HEK293 (cell line): ENCODE measurements at regions of chr11 and their contacts with region 1.

Region 1: GRCh38 chr11:86869966-86870570 is 69.7 kb downstream of the PRSS23 start:
- H3K4me3 ChIP-seq: no peak overlapping the region
- H3K27ac ChIP-seq: no peak overlapping the region
- H3K4me1 ChIP-seq: no peaks in the 10 kb centered on the region
- CTCF ChIP-seq: no peak

Region 2: GRCh38 chr11:86629045-86629706 is 240.9 kb before region 1 on chr11:
- CTCF ChIA-PET with region 1: no interaction called
- POLR2A ChIA-PET with region 1: no interaction called
- H3K4me3 ChIP-seq: no peak overlapping the region
- H3K27ac ChIP-seq: no peak overlapping the region
- H3K4me1 ChIP-seq: no peaks in the 10 kb centered on the region
- CTCF ChIP-seq: no peak

Region 3: DNA sequence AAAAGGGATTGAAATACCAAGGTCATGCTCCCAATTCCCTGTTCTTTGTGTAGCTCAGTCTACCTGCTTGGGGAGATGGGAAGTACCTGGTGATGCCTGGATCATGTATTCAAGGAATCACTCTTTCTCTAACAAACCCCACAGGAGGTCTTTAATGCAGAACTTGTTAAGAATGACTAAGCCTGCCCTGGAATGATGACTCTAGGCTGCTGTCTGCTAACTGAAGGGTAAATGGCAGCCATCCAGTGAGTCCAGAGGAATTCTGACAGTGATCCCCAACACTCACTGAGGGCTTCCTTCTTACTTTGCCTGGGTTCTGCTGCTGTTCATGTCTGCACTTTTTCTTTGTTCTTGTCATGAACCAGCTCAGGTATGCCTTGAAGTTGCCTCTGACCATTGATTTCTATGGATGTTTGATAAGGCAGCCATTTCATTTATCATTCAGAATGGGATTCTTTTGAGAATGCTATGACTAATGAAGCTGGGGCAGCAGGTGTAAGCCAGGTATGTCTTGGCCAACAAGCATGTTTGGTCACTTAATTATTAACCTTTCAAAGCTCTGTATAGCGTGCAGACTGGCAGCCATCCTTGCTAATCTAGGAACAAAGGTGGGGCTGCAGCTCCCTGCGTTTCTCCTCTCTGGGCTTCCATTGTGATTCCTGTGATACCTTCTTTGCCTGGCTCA is 58.3 kb before region 1 on chr11:
- CTCF ChIA-PET with region 1: interaction called, 10 read pairs
- POLR2A ChIA-PET with region 1: no interaction called
- H3K4me3 ChIP-seq: no peak overlapping the region
- H3K27ac ChIP-seq: no peak overlapping the region
- H3K4me1 ChIP-seq: peaks cover 3% of the 10 kb centered on the region; the same call in 1 of the 2 replicates
- CTCF ChIP-seq: no peak

Region 4: GRCh38 chr11:86888164-86889000 is 18.3 kb after region 1 on chr11:
- CTCF ChIA-PET with region 1: interaction called, 14 read pairs
- POLR2A ChIA-PET with region 1: no interaction called
- H3K4me3 ChIP-seq: no peak overlapping the region
- H3K27ac ChIP-seq: no peak overlapping the region
- H3K4me1 ChIP-seq: no peaks in the 10 kb centered on the region
- CTCF ChIP-seq: no peak

Region 5: GRCh38 chr11:86919557-86920210 is 49.6 kb after region 1 on chr11:
- CTCF ChIA-PET with region 1: interaction called, 144 read pairs
- POLR2A ChIA-PET with region 1: no interaction called
- H3K4me3 ChIP-seq: no peak overlapping the region
- H3K27ac ChIP-seq: no peak overlapping the region
- H3K4me1 ChIP-seq: no peaks in the 10 kb centered on the region
- CTCF ChIP-seq: peak; percentile 42; the same call in 1 of the 2 replicates

Region 6: GRCh38 chr11:86938900-86939880 is 69.1 kb after region 1 on chr11:
- CTCF ChIA-PET with region 1: interaction called, 12 read pairs
- POLR2A ChIA-PET with region 1: no interaction called
- H3K4me3 ChIP-seq: no peak overlapping the region
- H3K27ac ChIP-seq: no peak overlapping the region
- H3K4me1 ChIP-seq: peaks cover 3% of the 10 kb centered on the region; the same call in 1 of the 2 replicates
- CTCF ChIP-seq: no peak